Dendritic cell treated with granulocyte-macrophage colony-stimulating factor and Interleukin-4, amounts not matched to agents 40 ng/mL and 50 ng/mL, for 4 days (primary cell): ENCODE measurements at regions of chr1 and their contacts with region 1.

Region 1: GRCh38 chr1:108643492-108644335 is 17.2 kb downstream of the HENMT1 start:
- H3K4me3 Mint-ChIP-seq: no peak overlapping the region
- H3K27ac Mint-ChIP-seq: no peak overlapping the region
- H3K4me1 Mint-ChIP-seq: peaks cover 60% of the 10 kb centered on the region
- H3K27me3 Mint-ChIP-seq: peaks cover 3% of the 10 kb centered on the region

Region 2: GRCh38 chr1:108512239-108512981 is 131.3 kb before region 1 on chr1:
- intact Hi-C with region 1: loop called (anchors 1 kb)
- H3K4me3 Mint-ChIP-seq: no peak overlapping the region
- H3K27ac Mint-ChIP-seq: no peak overlapping the region
- H3K4me1 Mint-ChIP-seq: peaks cover 5% of the 10 kb centered on the region
- H3K27me3 Mint-ChIP-seq: peaks cover 11% of the 10 kb centered on the region

Region 3: DNA sequence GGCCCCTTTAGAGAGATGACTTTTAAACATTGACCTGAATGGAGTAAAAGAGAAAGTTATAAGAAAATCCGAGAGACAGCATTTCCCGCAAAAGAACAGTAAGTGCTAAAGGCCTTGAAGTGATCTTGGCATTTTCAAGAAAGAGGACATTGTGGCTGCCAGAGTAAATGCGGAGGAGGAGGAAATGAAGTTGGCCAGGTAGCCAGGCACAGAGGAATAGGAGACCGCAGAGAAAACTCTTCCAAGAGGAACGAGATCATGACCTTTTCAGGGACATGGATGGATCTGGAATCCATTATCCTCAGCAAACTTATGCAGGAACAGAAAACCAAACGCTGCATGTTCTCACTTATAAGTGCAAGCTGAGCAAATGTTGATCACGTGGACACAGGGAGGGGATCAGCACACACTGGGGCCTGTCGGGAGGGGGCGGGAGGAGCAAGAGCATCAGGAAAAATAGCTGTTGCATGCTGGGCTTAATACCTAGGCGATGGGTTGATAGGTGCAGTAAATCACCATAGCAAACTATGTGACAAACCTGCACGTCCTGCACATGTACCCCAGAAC is 34.1 kb before region 1 on chr1:
- intact Hi-C with region 1: no loop called
- H3K4me3 Mint-ChIP-seq: no peak overlapping the region
- H3K27ac Mint-ChIP-seq: no peak overlapping the region
- H3K4me1 Mint-ChIP-seq: no peaks in the 10 kb centered on the region
- H3K27me3 Mint-ChIP-seq: no peaks in the 10 kb centered on the region

Region 4: DNA sequence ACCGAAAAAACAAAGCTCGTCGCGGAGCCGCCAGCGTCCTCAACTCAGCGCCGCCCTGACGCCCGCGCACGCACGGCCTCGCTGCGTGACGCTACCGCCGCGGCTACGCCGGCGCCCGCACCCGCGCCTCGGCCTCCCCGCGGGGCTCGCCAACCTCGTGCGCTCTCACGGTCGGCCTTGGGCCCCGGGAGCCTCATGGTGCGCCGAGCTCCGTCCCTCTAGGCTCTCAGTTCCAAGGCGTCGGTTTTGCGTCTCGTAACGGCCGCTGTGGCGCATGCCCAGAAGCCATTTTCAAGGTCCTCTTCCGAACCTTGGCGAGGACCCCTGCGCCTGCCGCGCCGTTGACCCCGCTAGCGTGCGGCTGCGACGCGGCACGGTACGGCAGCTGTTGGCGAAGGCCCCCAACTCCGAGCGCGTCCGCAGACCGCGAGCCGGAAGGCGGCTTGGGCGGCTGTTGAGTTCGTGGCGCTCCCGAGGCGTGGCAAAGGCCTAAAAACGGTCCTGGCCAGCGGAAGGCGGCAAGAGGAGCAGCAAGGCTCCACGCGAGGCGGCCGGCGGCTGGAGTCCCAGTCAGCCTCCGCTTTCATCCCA is 17.4 kb after region 1 on chr1 and contains the start of gene HENMT1:
- intact Hi-C with region 1: loop called (anchors 2 kb)
- H3K4me3 Mint-ChIP-seq: peak within 1 kb of the TSS; percentile 81
- H3K27ac Mint-ChIP-seq: peak within 1 kb of the TSS; percentile 99
- H3K4me1 Mint-ChIP-seq: peaks cover 13% of the 10 kb centered on the region
- H3K27me3 Mint-ChIP-seq: no peaks in the 10 kb centered on the region

Region 5: DNA sequence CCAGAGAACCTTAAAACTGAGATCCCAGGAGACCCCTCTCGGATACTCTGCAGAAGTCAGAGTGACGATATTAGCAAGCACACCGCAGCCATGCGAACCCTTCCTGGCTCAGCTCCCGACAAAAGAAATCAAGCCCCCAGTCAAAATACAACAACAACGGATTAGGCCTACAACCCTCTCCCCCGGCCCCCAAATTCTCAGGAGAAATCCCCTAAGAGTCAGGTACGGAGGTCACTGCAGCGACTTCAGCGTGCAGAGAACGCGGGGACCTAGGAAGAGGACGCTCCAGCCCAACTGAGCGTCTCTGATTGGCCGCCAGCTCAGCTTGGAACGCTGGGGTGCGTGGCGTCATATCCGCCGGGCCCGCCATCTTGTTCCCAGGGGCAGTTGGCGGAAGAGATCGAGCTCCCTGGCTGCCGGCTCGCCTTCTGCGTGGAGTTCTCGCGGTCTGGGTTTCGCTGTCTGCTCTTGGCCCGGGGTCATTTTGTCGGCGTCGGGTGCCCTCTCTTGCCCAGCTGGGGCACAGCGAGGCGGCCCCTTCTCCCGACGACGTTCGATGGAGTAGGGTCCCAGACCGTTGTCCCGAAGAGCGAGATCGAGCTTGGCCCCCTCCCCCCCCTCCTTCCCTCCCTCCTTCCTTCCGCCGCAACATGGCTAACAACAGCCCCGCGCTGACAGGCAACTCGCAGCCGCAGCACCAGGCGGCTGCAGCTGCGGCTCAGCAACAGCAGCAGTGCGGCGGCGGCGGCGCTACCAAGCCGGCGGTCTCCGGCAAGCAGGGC is 48.4 kb after region 1 on chr1 and contains the start of gene PRPF38B:
- intact Hi-C with region 1: loop called (anchors 5 kb)
- H3K4me3 Mint-ChIP-seq: peak within 1 kb of the TSS; percentile 96
- H3K27ac Mint-ChIP-seq: peak within 1 kb of the TSS; percentile 100
- H3K4me1 Mint-ChIP-seq: peaks cover 21% of the 10 kb centered on the region
- H3K27me3 Mint-ChIP-seq: no peaks in the 10 kb centered on the region

Region 6: GRCh38 chr1:108708691-108709660 is 65.3 kb after region 1 on chr1:
- intact Hi-C with region 1: no loop called
- H3K4me3 Mint-ChIP-seq: no peak overlapping the region
- H3K27ac Mint-ChIP-seq: no peak overlapping the region
- H3K4me1 Mint-ChIP-seq: peaks cover 18% of the 10 kb centered on the region
- H3K27me3 Mint-ChIP-seq: peaks cover 7% of the 10 kb centered on the region